ENCODE measurements at regions of chr22 and their contacts with region 1.

Region 1: DNA sequence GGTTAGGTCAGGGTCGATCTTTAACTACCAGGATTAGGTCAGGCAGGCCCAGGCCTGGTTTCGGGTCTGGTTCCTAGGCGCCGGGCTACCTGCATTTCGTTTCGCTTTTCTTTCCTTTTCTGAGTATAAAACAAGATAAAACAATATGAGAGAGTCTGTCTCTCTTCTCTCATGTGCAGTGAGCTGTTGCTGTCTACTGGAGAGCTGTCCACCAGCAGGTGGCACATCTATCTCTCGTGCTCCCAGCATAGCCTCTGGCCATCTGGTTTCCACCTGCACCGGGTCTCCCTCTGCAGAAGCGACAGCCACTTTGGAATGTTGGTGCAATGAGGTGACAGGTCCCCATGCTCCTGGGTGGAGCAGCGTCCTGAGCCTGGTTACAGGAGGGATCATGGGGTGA is 27.6 kb downstream of the RIBC2 start:
- H3K4me3 ChIP-seq: no peak overlapping the region
- H3K27ac ChIP-seq: no peak overlapping the region
- H3K4me1 ChIP-seq: no peaks in the 10 kb centered on the region
- CTCF ChIP-seq: peak; percentile 78

Region 2: GRCh38 chr22:45268958-45269844 is 171.9 kb before region 1 on chr22:
- CTCF ChIA-PET with region 1: interaction called, 14 read pairs
- POLR2A ChIA-PET with region 1: no interaction called
- H3K4me3 ChIP-seq: peak overlapping the region; percentile 56
- H3K27ac ChIP-seq: peak overlapping the region; percentile 28; the same call in 1 of the 2 replicates
- H3K4me1 ChIP-seq: peaks cover 4% of the 10 kb centered on the region; the same call in 1 of the 2 replicates
- CTCF ChIP-seq: peak; percentile 69; the same call in 1 of the 2 replicates

Region 3: DNA sequence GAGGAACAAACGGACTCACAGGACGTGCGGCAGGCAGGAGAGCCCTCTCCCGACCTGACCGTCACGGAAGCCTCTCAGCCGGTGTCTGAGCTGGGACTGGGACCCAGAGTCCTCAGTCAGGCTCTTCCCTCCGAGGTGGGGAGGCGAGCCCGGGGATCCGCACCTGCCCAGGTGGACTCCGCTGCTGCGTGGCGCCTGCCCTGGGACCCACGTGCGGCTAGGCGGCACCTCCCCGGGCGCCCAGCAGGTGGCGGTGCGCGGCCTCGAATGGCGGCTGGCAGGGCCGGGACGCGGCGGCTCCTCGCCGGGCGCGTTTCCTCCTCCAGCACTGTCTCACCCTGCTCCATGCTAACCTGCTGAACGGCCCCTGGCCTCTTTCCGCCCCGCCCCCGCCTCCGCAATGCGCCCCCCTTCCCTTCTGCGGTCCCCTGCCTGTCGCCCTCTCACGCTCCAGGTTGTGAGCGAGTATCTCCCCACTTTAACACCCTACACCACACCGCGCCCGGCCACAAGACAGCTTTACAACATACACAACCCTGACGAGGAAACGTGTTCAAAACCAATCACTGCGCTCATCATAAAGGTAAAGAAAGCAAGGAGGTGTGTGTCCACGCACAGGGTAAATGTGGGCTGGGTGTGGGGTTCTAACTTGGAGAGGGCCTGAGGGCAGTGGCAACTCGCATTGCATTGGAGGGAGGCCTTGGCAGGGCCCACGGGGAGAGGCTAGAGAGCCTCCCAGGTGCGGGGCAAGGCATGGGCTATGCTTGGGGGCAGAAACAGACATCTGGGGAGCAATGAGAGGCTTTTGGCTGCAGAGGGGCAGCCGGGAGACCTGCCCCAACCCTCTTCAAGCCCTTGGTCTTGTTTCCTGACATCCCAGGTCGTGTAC is 204.6 kb after region 1 on chr22:
- CTCF ChIA-PET with region 1: no interaction called
- POLR2A ChIA-PET with region 1: no interaction called
- H3K4me3 ChIP-seq: no peak overlapping the region
- H3K27ac ChIP-seq: no peak overlapping the region
- H3K4me1 ChIP-seq: no peaks in the 10 kb centered on the region
- CTCF ChIP-seq: peak; percentile 84